ENCODE measurements at regions of chr14 and their contacts with region 1.

Region 1: DNA sequence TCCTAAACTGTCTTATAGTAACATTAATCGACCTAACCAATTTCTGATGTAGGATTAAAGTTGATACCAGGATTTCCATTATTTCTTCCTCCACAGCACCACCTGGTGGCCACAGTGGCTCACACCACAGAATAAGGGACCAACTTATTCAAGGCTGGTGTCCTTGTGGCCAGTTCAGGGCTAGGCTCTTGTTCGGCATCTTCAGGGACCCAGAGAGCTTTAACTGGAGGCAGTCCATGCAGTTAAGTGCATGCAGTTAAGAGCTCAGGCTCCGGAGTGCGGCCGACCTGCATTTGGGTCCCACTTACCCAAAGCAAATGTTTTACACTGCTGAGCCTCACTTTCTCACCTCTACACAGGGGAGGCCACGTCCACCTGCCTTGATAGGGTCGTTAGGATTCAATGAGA is 42.0 kb upstream of the GPR68 start:
- DNase-seq: peak; percentile 78 to 91
- ATAC-seq: peak; percentile 70
- H3K4me3 ChIP-seq: no peak overlapping the region
- H3K27ac ChIP-seq: no peak overlapping the region
- H3K4me1 ChIP-seq: no peaks in the 10 kb centered on the region
- H3K27me3 ChIP-seq: no peaks in the 10 kb centered on the region

Region 2: DNA sequence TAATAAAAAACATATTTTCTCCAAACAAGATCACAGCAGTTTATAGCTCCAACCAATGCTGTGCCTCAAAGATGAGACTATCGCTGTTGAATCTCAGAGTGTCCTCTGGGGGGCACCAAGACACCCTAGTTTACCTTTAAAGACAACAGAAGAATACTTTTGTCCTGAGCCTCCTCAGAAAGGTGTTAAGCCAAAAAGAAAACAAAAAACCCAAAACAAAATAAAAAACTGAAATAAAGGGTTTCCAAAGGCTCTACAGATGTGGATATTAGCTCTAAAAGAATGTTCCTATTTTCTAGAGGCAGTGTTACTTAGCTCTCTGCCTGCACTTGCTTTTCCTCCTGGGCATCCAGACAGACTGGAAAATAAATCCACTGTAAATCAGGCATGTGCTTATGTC is 383.4 kb before region 1 on chr14:
- intact Hi-C with region 1: loop called (anchors 2 kb)
- DNase-seq: peak in 1 of 2 donors; percentile 57
- ATAC-seq: peak; percentile 83
- H3K4me3 ChIP-seq: no peak overlapping the region
- H3K27ac ChIP-seq: no peak overlapping the region
- H3K4me1 ChIP-seq: no peaks in the 10 kb centered on the region
- H3K27me3 ChIP-seq: no peaks in the 10 kb centered on the region

Region 3: DNA sequence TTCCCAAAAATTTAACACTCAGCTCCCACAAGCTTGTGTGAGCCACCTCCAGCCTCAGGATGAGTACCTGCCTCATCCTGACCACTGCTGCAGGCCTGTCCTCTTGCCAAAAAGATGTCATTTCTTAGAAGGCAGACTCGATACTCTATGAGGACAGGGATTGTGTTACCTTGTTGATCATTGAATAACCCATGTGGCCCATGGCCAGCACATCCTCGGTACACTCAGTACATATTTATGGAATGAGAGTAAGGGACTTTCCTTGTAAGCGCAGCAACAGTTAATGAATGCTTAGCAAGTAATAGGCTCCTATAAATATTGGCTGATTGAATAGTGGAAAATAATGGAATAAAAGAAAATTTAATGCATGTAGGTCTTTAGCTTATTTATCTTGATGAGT is 187.9 kb before region 1 on chr14:
- intact Hi-C with region 1: no loop called
- DNase-seq: no peak
- ATAC-seq: no peak
- H3K4me3 ChIP-seq: no peak overlapping the region
- H3K27ac ChIP-seq: no peak overlapping the region
- H3K4me1 ChIP-seq: no peaks in the 10 kb centered on the region
- H3K27me3 ChIP-seq: no peaks in the 10 kb centered on the region

Region 4: GRCh38 chr14:91244501-91244901 is 42.0 kb before region 1 on chr14 and contains the start of gene GPR68:
- intact Hi-C with region 1: no loop called
- DNase-seq: peak; percentile 74 to 79
- ATAC-seq: peak; percentile 69
- H3K4me3 ChIP-seq: no peak within 1 kb of the TSS
- H3K27ac ChIP-seq: no peak within 1 kb of the TSS
- H3K4me1 ChIP-seq: no peaks in the 10 kb centered on the region
- H3K27me3 ChIP-seq: no peaks in the 10 kb centered on the region
- total RNA-seq, gene GPR68: 0.84 to 6.3 TPM

Region 5: DNA sequence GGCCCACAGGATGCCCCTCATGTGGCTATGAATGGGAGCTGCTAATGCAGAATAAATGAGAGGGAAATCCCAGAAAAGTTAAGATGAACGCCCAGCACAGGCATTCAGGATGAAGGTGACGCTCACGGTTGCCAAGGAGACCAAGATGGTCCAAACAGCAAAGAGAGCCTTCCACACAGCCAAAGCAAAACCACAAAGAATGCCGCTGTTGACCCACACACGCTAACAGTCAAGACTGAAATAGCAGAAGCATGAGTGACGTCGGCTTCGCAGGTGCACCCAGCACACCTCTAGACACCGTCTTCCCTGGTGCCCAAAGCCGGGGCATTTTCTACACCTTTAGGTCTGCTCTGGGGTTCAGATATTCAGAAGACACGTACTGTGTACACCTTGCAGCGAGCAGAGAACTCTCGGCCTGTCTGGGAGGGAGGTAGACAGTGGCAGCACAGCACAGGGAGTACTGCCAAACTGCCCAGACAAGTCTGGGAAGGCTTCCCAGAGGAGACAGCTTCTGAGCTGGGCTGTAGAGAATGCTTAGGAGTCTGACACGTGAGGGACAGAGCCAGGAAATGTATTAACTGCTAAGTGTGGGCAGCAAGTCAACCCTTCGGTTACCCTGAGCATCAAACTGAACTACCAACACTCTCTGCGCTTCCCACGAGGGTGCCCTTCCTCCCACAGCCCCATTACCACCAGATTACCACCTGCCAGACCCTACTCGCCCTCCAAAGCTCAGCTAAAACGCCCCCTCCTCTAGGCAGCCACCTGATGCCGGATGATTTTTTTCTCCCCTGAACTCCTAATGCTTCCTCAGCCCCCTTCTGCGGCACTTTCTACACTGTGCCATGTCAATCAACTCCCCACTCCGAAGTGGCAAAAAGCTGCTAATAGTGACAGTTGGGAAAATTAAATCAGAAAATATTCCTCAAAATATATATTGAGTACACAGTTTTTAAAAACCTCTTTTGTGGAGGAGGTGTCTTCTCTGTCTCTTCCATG is 80.9 kb after region 1 on chr14:
- intact Hi-C with region 1: no loop called
- DNase-seq: no peak
- ATAC-seq: no peak
- H3K4me3 ChIP-seq: no peak overlapping the region
- H3K27ac ChIP-seq: no peak overlapping the region
- H3K4me1 ChIP-seq: no peaks in the 10 kb centered on the region
- H3K27me3 ChIP-seq: no peaks in the 10 kb centered on the region

Region 6: DNA sequence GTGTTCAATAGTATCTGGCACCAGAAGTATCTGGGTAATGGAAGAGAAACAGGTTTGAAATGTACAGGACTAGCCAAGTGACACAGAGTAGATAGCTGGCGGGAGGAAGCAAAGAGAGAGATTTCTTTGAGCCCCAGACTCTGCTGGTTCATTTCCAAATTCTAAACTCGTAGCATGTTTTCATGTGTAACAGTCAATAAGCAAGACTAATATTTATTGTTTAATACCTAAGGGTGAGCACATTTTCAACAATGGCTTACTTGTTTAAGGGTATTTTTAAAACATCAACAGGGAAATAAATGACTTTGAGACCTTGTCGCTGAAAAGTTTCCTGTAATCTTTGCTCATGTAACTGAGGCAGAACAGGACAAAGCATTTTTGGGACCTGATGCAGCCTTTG is 142.9 kb after region 1 on chr14:
- intact Hi-C with region 1: no loop called
- DNase-seq: no peak
- ATAC-seq: no peak
- H3K4me3 ChIP-seq: no peak overlapping the region
- H3K27ac ChIP-seq: no peak overlapping the region
- H3K4me1 ChIP-seq: no peaks in the 10 kb centered on the region
- H3K27me3 ChIP-seq: peaks cover 0 to 2% of the 10 kb centered on the region in 2 donors

Measured in aorta (tissue), 5 donors.